A673 (cell line): ENCODE measurements at regions of chr2 and their contacts with region 1.

Region 1: DNA sequence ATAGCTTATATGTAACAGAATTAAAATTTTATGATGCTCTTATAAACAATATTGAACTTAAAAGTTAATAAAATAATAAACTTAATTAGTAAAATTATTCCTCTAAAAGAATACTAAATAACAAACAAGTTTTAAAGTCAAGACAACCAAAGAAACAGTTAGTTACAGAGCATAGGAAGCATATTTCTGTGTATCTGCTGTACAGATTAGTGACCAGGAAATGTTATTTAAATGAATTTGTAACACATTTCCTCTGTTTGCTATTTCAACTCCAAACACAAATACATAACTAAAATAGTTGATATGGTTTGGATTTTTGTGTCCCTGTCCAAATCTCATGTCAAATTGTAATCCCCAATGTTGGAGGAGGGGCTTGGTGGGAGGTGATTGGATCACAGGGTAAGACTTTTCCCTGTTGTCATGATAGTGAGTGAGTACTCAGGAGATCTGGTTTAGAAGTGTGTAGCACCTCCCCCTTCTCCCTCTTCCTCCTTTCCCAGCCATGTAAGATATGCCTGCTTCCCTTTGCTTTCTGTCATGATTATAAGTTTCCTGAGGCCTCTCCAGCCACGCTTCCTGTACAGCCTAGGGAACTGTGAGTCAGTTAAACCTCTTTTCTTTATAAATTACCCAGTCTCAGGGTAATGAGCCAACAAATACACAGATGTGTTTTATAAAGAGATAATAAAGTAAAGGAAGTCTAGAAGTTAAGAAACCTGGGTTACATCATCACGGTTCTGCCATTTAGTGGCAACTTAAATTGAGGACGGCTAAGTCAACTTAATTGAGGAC is 51.8 kb downstream of the ROCK2 start:
- DNase-seq: peak; percentile 84
- H3K4me3 ChIP-seq: no peak overlapping the region
- H3K27ac ChIP-seq: peak overlapping the region; percentile 51
- H3K4me1 ChIP-seq: no peaks in the 10 kb centered on the region
- H3K27me3 ChIP-seq: no peaks in the 10 kb centered on the region
- CTCF ChIP-seq: no peak

Region 2: DNA sequence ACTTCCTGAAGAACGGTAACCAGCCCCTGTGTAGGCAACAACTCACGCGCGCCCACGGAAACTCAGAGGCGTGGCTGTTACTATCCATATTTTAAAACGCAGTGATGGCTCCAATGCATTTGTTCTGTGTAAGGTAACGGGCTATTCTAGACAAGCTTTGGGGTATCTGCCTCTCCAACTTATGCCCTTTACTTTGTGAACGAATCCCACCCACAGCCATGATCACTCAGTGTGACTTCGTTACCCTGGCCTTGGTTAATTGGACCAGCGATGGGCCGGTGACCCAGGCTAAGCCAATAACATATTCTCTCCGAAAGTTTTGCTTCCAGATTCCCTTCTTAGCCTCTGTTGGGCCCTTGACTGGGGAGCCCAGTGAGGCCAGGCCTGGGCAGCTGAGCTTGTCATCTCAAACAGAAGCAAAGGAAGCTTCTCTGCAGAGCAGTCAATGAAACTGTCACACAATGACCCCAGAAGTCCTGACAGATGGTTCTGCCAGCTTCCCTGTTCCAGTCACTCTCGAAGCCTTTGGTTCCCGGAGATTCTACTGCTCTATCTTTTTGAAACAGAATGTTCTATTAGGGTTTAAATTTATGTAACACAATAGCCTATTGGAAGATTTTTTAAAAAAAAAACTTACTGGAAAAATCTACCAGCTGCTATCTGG is 82.5 kb after region 1 on chr2:
- CTCF ChIA-PET with region 1: no interaction called
- POLR2A ChIA-PET with region 1: interaction called, 31 read pairs
- intact Hi-C with region 1: no loop called
- DNase-seq: no peak
- H3K4me3 ChIP-seq: no peak overlapping the region
- H3K27ac ChIP-seq: peak overlapping the region; percentile 81
- H3K4me1 ChIP-seq: peaks cover 19% of the 10 kb centered on the region
- H3K27me3 ChIP-seq: no peaks in the 10 kb centered on the region
- CTCF ChIP-seq: no peak